Activated CD8-positive, alpha-beta memory T cell treated with anti-CD3 and anti-CD28 coated beads, Interleukin-2, amount 10 ng/mL, durations not matched to agents 7 days and 5 days (primary cell): ENCODE measurements at regions of chr1 and their contacts with region 1.

Region 1: DNA sequence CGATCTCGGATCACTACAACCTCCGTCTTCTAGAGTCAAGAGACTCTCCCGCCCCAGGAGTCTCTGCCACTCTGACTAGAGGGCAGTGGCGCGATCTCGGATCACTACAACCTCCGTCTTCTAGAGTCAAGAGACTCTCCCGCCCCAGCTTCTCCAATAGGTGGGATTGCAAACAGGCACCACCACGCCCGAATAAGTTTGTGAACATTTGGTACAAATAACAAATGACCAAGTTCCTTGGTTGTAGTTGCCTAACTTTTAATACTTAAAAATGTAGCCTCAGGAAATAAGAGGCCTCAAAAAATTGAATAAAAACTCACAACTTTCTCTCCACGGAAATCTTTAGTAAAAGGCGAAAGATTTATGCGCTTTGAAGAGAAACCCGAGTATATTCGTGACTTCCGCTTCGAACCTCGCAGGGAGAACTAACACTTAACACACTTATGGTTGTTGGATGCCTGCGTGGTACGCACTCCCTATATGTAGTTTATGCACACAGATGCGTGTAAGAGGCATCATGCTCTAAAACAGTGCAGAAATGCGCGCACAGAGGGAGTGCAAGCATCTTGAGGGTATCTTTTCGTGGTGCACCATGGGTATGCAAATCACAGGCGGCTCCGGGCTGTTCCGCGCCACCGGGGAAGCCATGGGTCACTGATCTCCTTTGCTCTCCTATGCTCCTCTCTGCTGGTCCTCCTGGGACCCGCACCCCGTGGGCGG is 11.4 kb downstream of the BTBD19 start:
- DNase-seq: peak; percentile 95
- ATAC-seq: peak; percentile 90
- H3K4me3 Mint-ChIP-seq: peak overlapping the region; percentile 83
- H3K27ac Mint-ChIP-seq: peak overlapping the region; percentile 100
- H3K4me1 Mint-ChIP-seq: peaks cover 43% of the 10 kb centered on the region
- H3K27me3 Mint-ChIP-seq: no peaks in the 10 kb centered on the region

Region 2: DNA sequence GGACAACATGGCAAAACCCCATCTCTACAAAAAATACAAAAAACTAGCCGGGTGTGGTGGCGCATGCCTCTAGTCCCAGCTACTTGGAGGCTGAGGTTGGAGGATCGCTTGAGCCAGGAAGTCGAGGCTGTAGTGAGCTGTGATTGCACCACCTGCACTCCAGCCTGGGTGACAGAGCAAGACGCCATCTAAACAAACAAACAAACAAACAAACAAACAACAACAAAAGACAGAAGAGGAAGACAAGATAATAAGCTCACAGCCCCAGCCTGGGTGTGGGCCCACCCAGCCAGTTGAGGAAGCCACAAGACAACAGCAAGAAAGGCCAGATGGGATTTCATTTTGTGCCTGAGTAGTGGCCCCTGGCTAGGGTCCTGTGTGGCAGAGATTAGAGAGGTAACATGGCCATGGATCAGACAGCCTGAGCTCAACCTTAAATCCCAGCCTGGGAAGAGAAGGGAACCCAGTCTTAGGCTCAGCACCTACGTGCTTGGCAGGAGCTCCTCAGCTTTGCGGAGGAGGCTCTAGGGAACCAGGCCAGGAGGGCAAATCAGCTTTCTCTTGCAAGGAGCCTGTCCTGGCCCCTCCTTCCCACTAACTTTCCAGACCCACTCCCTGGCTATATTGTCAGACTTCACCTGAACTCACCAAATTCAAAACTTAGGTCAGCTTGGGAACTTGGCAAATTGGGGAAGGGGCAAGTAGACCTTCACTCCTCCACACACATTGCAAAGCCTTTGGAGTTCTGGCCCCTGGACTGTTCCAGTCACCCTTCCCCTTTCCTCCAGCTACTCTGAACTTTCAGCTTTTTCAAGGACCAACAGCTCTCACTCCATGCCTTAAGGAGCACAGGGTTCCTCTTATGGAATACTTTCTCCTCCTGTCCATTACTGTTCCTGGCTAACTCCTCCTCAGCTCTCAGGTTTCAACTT is 26.7 kb before region 1 on chr1:
- CTCF ChIA-PET with region 1: interaction called, 62 read pairs
- DNase-seq: no peak
- ATAC-seq: no peak
- H3K4me3 Mint-ChIP-seq: no peak overlapping the region
- H3K27ac Mint-ChIP-seq: no peak overlapping the region
- H3K4me1 Mint-ChIP-seq: peaks cover 7% of the 10 kb centered on the region
- H3K27me3 Mint-ChIP-seq: no peaks in the 10 kb centered on the region

Region 3: GRCh38 chr1:44799770-44800584 is 19.8 kb before region 1 on chr1 and contains the start of gene PLK3:
- CTCF ChIA-PET with region 1: interaction called, 62 read pairs
- DNase-seq: peak; percentile 99
- ATAC-seq: peak; percentile 81
- H3K4me3 Mint-ChIP-seq: peak within 1 kb of the TSS; percentile 78
- H3K27ac Mint-ChIP-seq: peak within 1 kb of the TSS; percentile 100
- H3K4me1 Mint-ChIP-seq: peaks cover 29% of the 10 kb centered on the region
- H3K27me3 Mint-ChIP-seq: no peaks in the 10 kb centered on the region
- total RNA-seq, gene PLK3: 43.1 to 48.9 TPM

Region 4: DNA sequence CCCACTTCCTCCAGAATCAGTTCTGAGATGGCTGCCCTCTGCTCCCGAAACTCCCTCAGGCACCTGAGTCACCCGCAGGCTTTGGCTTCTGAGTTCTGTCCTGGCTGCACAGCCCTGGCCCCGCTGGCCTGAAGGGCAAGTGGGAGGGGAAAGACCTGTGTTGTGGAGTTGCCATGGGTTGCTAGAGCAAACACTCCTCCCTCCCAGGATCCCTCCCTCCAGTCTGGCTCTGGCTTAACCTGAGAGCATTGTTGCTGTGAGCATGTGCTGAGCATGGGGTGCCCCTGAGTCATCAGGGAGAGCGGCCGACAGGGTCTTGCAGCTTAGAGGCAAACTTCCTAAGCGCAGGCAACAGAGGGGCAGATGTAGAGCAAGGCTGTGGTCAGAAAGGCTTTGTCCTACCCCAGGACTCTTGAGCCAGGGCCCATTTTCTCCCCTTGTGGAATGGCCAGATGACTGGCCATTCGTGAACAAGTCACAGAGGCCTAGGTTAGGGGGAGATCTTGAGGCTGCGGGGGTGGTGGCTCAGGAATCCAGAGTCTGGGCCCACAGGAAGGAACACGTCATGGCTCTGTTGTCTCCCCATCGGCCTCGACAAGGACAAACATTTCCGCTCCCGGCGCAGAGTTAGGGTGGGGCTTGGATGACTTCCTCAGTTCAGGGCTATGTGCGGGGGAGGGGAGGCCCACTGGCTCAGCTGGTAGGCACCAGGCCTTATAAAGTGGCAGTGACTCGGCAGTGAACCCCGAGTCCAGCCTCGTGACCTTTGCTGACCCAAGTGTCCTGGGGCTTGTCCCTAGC is 12.3 kb before region 1 on chr1 and contains the start of gene DYNLT4:
- CTCF ChIA-PET with region 1: interaction called, 62 read pairs
- DNase-seq: peak; percentile 97
- ATAC-seq: peak; percentile 56
- H3K4me3 Mint-ChIP-seq: peak within 1 kb of the TSS; percentile 64
- H3K27ac Mint-ChIP-seq: peak within 1 kb of the TSS; percentile 99
- H3K4me1 Mint-ChIP-seq: peaks cover 69% of the 10 kb centered on the region
- H3K27me3 Mint-ChIP-seq: no peaks in the 10 kb centered on the region
- total RNA-seq, gene DYNLT4: 0.40 to 1.3 TPM

Region 5: DNA sequence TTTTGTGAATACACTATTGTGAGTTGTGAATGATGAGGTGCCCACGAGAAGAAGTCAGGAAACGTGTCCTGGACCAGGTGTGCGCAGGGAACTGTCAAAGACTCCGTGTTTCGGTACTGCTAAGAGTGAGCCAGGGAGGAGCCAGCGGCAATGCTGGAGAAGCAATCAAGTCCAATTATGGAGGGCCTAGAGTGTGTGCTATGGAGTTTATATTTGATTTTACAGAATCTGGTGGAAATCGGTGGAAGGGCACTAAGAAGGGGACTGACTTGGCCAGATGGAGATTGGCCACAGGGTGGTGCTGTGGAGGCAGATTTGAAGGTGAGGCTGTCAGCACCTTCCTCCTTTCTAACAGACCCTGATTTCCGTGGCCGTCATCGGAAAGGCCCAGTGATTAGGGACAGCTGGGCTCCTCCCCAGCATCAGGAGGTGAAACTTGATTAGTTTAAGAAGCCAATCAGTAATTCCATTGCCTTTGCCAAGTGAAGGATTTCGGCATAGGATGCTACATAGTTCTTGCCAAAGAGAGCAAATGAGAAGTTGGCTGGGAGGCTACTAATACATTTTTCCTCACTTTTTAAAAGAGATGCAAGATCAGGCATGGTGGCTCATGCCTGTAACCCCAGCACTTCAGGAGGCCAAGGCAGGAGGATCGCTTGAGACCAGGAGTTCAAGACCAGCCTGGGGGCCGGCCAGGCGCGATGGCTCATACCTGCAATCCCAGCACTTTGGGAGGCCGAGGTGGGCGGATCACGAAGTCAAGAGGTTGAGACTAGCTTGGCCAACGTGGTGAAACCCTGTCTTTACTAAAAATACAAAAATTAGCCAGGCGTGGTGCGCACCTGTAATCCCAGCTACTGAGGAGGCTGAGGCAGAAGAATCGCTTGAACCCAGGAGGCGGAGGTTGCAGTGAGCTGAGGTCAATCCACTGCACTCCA is 16.2 kb after region 1 on chr1:
- CTCF ChIA-PET with region 1: interaction called, 11 read pairs
- DNase-seq: peak; percentile 94
- ATAC-seq: peak; percentile 97
- H3K4me3 Mint-ChIP-seq: no peak overlapping the region
- H3K27ac Mint-ChIP-seq: peak overlapping the region; percentile 47
- H3K4me1 Mint-ChIP-seq: peaks cover 9% of the 10 kb centered on the region
- H3K27me3 Mint-ChIP-seq: no peaks in the 10 kb centered on the region